ENCODE measurements at regions of chr5 and their contacts with region 1.

Region 1: DNA sequence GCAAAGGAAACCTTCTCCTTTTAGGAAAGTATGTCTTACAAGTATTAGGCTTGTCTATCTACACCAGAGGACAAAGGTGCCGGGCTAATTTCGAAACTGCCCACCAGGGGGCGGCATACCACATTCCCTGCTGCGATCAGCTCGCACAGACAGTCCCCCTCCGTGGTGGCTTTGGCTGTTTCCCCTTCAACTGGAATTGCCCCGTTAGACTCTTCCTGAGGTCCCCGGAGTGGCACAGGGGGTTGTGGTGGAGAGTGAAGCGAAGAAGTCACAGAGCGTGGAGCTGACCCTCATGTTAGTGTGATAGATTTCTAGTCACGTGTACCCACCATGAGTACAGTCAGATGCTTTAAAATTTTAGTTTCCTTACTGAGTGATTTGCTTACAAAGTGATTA is 17.5 kb downstream of the PTTG1 start:
- DNase-seq: peak; percentile 86 to 90 (median 87)
- H3K4me3 ChIP-seq: peak overlapping the region; percentile 5 to 94 (median 71)
- H3K27ac ChIP-seq: peak overlapping the region; percentile 18 to 55
- H3K4me1 ChIP-seq: peaks cover 10 to 34% (median 31%) of the 10 kb centered on the region in 4 experiments
- H3K27me3 ChIP-seq: no peaks in the 10 kb centered on the region

Region 2: GRCh38 chr5:160165137-160166068 is 273.8 kb before region 1 on chr5:
- CTCF ChIA-PET with region 1: no interaction called
- POLR2A ChIA-PET with region 1: no interaction called
- DNase-seq: peak; percentile 79 to 96 (median 94)
- H3K4me3 ChIP-seq: peak overlapping the region in 2 of 7 experiments; percentile 14 to 17
- H3K27ac ChIP-seq: peak overlapping the region in 1 of 2 experiments; percentile 38
- H3K4me1 ChIP-seq: peaks cover 0 to 25% (median 18%) of the 10 kb centered on the region in 4 experiments
- H3K27me3 ChIP-seq: no peaks in the 10 kb centered on the region

Region 3: GRCh38 chr5:160427607-160428006 is 11.6 kb before region 1 on chr5:
- CTCF ChIA-PET with region 1: interaction called, 39 read pairs
- POLR2A ChIA-PET with region 1: interaction called, 3 read pairs
- DNase-seq: no peak
- H3K4me3 ChIP-seq: no peak overlapping the region
- H3K27ac ChIP-seq: no peak overlapping the region
- H3K4me1 ChIP-seq: peaks cover 10 to 35% (median 19%) of the 10 kb centered on the region in 4 experiments
- H3K27me3 ChIP-seq: no peaks in the 10 kb centered on the region

Region 4: DNA sequence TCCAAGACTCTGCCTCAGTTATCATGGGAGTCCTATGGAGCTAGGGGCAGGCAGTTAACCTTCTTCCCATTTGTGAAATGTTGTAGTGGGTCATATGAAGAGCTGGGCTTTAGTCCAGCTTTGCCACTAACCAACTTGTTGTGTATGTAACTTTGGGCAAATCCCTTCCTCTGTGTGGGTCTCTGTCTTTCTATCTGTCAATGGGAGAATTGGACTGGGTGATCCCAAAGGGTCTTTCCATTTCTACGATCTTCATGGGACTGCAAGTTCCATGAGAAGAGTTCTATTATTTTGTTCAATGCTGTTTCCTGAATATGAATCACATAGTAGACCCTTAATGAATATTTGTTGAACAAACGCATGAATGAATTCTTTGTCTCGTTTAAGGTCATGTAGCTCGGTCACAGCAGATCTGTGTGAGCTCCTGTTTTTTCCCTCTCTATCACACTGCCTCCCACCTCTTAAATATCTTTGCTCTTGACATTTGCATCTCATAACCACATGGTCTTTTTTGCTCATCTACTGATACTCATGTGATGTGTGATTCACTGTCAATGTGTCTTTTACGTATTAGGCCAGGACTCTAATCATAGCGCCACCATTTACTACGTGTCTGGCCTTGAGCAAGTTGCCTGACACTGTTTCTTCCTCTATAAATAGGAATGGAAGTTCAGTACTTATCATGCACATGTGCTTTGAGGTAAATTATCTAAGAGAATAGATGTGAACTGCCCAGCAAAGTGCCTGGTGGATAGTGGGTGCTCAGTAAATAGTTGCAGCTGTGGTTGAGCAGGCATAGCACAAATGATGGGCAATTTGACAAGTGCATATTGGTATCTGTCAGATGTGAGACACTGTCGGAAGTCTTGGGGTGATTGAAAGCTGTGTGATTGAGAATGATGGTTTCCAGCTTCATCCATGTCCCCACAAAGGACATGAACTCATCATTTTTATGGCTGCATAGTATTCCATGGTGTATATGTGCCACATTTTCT is 19.9 kb after region 1 on chr5:
- CTCF ChIA-PET with region 1: interaction called, 115 read pairs
- POLR2A ChIA-PET with region 1: no interaction called
- DNase-seq: no peak
- H3K4me3 ChIP-seq: no peak overlapping the region
- H3K27ac ChIP-seq: no peak overlapping the region
- H3K4me1 ChIP-seq: peaks cover 5 to 35% (median 25%) of the 10 kb centered on the region in 4 experiments
- H3K27me3 ChIP-seq: no peaks in the 10 kb centered on the region

Region 5: DNA sequence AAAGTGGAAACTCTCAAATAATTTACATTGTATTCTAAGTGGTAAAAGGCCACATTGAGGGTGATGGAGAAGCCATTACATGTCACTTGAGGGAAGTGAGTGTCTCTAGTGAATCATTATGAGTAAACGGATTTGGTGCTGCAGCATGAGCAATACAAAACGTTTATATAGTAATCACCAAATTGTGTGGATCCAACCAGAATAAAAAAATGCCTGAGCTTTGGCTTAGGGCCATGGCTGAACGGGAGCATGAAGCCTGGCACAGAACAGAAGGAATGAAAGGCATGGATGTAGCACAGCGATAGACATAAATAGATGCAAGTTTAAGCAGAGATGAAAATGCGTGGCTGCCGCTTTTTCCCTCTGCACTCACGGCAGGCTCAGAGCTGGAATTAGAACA is 40.7 kb after region 1 on chr5:
- CTCF ChIA-PET with region 1: interaction called, 45 read pairs
- POLR2A ChIA-PET with region 1: no interaction called
- DNase-seq: peak in 1 of 3 donors; percentile 24
- H3K4me3 ChIP-seq: no peak overlapping the region
- H3K27ac ChIP-seq: no peak overlapping the region
- H3K4me1 ChIP-seq: peaks cover 4 to 44% (median 26%) of the 10 kb centered on the region in 4 experiments
- H3K27me3 ChIP-seq: no peaks in the 10 kb centered on the region

Region 6: GRCh38 chr5:160500786-160501779 is 61.9 kb after region 1 on chr5:
- CTCF ChIA-PET with region 1: interaction called, 156 read pairs
- POLR2A ChIA-PET with region 1: interaction called, 7 read pairs
- DNase-seq: peak in 2 of 3 donors; percentile 51 to 66
- H3K4me3 ChIP-seq: no peak overlapping the region
- H3K27ac ChIP-seq: no peak overlapping the region
- H3K4me1 ChIP-seq: peaks cover 0 to 32% (median 20%) of the 10 kb centered on the region in 4 experiments
- H3K27me3 ChIP-seq: no peaks in the 10 kb centered on the region

Region 7: DNA sequence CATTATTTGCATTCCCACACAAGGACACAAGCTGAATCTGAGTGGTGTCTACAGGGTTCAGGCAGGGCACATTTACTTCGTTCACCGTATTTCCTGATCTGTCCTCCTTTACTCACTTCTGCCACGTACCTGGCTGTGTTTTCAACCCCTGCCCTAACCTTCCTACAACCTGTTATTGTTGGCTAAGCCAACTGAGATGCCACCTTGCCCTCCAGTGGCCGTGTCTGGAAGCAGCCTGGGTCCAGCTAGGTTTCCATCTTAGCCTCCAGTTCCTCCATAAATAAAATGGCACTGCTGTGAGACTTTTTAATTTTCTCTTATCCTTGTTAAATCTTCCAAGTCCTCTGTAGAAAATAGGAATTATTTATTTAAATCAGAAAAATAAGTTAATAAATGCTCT is 348.0 kb after region 1 on chr5:
- CTCF ChIA-PET with region 1: interaction called, 29 read pairs
- POLR2A ChIA-PET with region 1: no interaction called
- DNase-seq: peak; percentile 11 to 40 (median 34)
- H3K4me3 ChIP-seq: no peak overlapping the region
- H3K27ac ChIP-seq: no peak overlapping the region
- H3K4me1 ChIP-seq: peaks cover 0 to 1% (median 0%) of the 10 kb centered on the region in 4 experiments
- H3K27me3 ChIP-seq: peaks cover 0 to 2% (median 0%) of the 10 kb centered on the region in 5 experiments

Measured in common myeloid progenitor, CD34-positive (primary cell).